ENCODE measurements at regions of chr1 and their contacts with region 1.

Region 1: GRCh38 chr1:212070720-212071302 is 35.3 kb downstream of the DTL start:
- DNase-seq: no peak
- H3K4me3 Mint-ChIP-seq: no peak overlapping the region
- H3K27ac Mint-ChIP-seq: no peak overlapping the region
- H3K4me1 Mint-ChIP-seq: no peaks in the 10 kb centered on the region
- H3K27me3 Mint-ChIP-seq: no peaks in the 10 kb centered on the region

Region 2: GRCh38 chr1:211680752-211681327 is 390.0 kb before region 1 on chr1:
- CTCF ChIA-PET with region 1: interaction called, 10 read pairs
- DNase-seq: peak; percentile 77
- H3K4me3 Mint-ChIP-seq: no peak overlapping the region
- H3K27ac Mint-ChIP-seq: peak overlapping the region; percentile 73
- H3K4me1 Mint-ChIP-seq: peaks cover 21% of the 10 kb centered on the region
- H3K27me3 Mint-ChIP-seq: no peaks in the 10 kb centered on the region

Region 3: DNA sequence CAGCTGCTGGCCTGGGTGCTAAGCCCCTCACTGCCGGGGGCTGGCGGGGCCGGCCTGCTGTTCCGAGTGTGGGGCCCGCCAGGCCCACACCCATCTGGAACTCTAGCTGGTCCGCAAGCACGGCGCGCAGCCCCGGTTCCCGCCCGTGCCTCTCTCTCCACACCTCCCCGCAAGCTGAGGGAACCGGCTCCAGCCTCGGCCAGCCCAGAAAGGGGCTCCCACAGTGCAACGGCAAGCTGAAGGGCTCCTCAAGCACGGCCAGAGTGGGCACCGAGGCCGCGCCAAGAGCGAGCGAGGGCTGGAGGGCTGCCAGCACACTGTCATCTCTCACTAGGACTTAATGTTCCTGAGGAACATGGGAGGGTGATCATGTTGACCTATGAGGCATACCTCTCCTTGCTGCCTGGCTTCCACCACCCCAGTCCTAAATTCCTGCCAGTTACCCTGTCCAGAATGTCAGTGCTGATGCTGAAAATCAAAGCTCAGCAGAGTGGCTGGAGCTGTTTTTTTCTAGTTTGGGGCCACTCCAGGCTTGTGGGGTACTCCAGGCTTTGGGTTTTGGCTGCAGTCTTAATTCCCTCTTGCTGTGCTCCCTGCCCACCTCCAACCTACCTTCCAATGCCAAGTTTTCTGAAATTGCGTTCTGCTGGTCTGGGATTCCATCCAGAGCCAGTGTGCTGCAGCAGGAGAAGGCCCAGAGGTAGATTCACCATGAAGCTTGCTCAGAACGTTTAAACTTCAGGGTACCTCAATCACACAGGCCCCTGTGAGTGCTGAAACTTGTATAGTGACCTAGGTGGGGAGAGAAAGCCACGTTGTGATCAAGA is 196.1 kb before region 1 on chr1:
- CTCF ChIA-PET with region 1: no interaction called
- DNase-seq: no peak
- H3K4me3 Mint-ChIP-seq: no peak overlapping the region
- H3K27ac Mint-ChIP-seq: no peak overlapping the region
- H3K4me1 Mint-ChIP-seq: no peaks in the 10 kb centered on the region
- H3K27me3 Mint-ChIP-seq: peaks cover 29% of the 10 kb centered on the region

Region 4: DNA sequence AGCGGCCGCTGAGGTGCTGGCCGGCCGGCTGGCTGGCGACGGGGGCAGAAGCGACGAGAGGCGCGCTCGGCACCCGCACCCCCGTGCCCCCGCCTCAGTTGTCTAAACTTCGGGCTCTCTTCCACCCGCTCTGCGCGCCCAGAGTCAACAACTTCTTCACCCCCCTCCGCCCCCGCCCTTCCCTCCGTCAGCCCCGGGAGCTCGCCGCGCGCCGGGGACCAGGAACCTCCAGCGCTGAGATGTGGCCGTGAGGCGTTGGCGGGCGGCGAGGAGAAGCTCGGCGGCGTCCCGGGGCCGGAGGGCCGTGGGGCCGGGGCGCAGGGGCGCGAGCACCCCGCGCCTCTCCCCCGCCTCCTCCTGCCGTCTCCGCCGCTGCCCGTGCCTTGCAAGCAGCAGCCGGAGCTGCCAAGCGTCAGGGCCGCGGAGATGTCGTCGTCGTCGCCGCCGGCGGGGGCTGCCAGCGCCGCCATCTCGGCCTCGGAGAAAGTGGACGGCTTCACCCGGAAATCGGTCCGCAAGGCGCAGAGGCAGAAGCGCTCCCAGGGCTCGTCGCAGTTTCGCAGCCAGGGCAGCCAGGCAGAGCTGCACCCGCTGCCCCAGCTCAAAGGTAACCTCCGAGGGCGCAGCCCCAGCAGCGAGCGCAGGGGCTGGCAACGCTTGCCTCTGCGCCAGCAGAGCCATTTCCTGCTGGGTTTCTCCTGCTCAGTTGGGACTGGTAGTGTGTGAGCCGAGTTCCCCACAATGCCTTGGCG is 215.1 kb after region 1 on chr1:
- CTCF ChIA-PET with region 1: interaction called, 37 read pairs
- DNase-seq: peak; percentile 83
- H3K4me3 Mint-ChIP-seq: peak overlapping the region; percentile 100
- H3K27ac Mint-ChIP-seq: peak overlapping the region; percentile 100
- H3K4me1 Mint-ChIP-seq: peaks cover 52% of the 10 kb centered on the region
- H3K27me3 Mint-ChIP-seq: peaks cover 12% of the 10 kb centered on the region

Region 5: GRCh38 chr1:212291505-212292134 is 220.8 kb after region 1 on chr1:
- CTCF ChIA-PET with region 1: interaction called, 37 read pairs
- DNase-seq: no peak
- H3K4me3 Mint-ChIP-seq: peak overlapping the region; percentile 0
- H3K27ac Mint-ChIP-seq: peak overlapping the region; percentile 17
- H3K4me1 Mint-ChIP-seq: peaks cover 72% of the 10 kb centered on the region
- H3K27me3 Mint-ChIP-seq: no peaks in the 10 kb centered on the region

Region 6: DNA sequence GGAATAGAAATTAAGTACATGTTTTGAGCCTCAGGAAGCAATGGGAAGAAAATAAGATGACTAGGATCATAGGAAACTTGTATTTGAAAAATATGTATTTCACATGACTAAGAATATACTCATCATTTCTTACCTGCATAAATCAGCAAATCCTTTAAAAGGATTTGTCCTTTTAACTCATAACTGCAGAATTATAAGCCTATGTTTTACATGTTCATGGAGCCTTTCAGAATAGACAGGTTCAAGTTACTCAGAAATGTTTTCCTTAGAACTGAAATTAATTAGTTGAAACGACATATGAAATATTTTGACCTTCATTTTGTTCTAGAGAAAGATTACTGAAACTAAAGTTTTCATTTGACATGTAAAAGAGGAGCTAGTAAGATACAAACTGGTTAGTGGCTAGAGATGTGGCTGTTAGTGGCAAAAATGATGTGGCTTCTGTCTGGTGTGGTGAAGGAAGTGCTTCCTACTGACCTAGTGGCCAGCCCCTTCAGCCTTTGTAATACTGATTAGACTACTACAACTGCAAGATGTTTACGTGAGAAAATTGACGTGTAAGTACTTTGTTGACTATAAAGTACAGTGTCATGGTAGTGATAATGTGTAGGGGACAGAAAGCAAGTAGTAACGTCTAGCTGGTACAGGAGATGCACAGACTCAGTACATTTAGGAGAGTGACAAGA is 289.1 kb after region 1 on chr1:
- CTCF ChIA-PET with region 1: interaction called, 49 read pairs
- DNase-seq: no peak
- H3K4me3 Mint-ChIP-seq: no peak overlapping the region
- H3K27ac Mint-ChIP-seq: no peak overlapping the region
- H3K4me1 Mint-ChIP-seq: no peaks in the 10 kb centered on the region
- H3K27me3 Mint-ChIP-seq: no peaks in the 10 kb centered on the region

Region 7: GRCh38 chr1:212368073-212368484 is 297.3 kb after region 1 on chr1:
- CTCF ChIA-PET with region 1: interaction called, 49 read pairs
- DNase-seq: peak; percentile 71
- H3K4me3 Mint-ChIP-seq: no peak overlapping the region
- H3K27ac Mint-ChIP-seq: no peak overlapping the region
- H3K4me1 Mint-ChIP-seq: no peaks in the 10 kb centered on the region
- H3K27me3 Mint-ChIP-seq: no peaks in the 10 kb centered on the region